ENCODE measurements at regions of chr11 and their contacts with region 1.

Region 1: DNA sequence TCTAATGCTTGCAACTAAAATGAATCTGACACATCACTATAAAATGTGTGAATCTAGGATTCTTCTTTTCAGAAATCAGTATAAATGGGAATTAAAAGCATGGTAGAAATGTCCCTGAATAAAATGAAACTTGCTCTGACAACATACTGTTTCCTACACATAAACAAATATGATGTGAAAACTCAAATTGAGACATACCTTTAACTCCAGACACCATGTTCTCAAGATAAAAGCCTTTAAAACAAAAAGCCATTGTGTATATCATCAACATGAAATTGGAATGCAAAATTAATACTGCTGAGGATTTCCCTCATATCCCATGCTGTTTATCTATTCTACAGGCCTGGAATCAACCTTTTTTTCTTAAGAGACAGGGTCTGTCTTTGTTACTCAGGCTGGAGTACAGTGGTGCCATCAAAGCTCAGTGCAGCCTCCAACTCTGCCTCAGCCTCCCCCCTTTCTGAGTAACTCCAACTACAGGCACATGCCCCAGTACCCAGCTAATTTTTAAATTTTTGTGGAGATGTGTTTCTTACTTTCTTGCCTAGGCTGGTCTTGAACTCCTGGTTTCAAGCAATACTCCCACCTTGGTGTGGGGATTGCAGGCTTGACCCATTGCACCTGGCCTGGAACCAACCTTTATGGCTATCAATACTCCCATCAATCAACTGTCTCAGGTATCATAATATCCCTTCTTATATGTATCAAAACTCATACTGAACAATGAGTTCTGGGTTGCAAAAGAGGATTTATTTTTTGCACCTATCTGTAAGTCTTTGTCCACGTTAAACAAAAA is 6.7 kb downstream of the TAF1D start:
- DNase-seq: no peak
- ATAC-seq: no peak
- H3K4me3 Mint-ChIP-seq: peak overlapping the region; percentile 54
- H3K27ac Mint-ChIP-seq: peak overlapping the region; percentile 65
- H3K4me1 Mint-ChIP-seq: peaks cover 49% of the 10 kb centered on the region
- H3K27me3 Mint-ChIP-seq: no peaks in the 10 kb centered on the region

Region 2: DNA sequence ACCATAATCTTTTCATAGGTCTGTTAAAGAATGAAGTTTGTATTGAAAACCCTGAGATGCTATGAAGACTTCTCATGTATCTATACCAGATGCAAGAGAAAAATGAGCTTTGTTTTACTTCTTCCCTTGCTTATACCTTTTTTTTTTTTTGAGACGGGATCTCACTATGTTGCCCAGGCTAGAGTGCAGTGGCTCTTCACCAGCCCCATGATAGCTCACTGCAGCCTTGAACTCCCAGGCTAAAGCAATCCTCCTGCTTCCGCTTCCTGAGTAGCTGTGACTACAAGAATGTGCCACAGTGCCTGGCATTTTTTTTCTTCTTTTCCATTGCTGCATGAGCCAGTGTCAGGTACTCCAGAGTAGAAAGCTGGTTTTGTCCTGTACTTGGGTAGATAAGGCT is 62.3 kb before region 1 on chr11:
- CTCF ChIA-PET with region 1: interaction called, 3 read pairs
- POLR2A ChIA-PET with region 1: no interaction called
- intact Hi-C with region 1: loop called in 1 of 2 experiments (anchors 2 kb)
- DNase-seq: no peak
- ATAC-seq: no peak
- H3K4me3 Mint-ChIP-seq: no peak overlapping the region
- H3K27ac Mint-ChIP-seq: no peak overlapping the region
- H3K4me1 Mint-ChIP-seq: peaks cover 10% of the 10 kb centered on the region
- H3K27me3 Mint-ChIP-seq: no peaks in the 10 kb centered on the region

Measured in activated CD4-positive, alpha-beta T cell treated with anti-CD3 and anti-CD28 coated beads for 36 hours (primary cell).